ENCODE measurements at regions of chr17 and their contacts with region 1.

Region 1: GRCh38 chr17:16653209-16654041 is at the start of gene ZNF624:
- DNase-seq: peak; percentile 94 to 99
- ATAC-seq: peak; percentile 94
- H3K4me3 ChIP-seq: peak within 1 kb of the TSS; percentile 66 to 93 (median 82)
- H3K27ac ChIP-seq: peak within 1 kb of the TSS; percentile 93 to 99 (median 96)
- H3K4me1 ChIP-seq: peaks cover 0 to 4% of the 10 kb centered on the region in 2 donors
- H3K27me3 ChIP-seq: no peaks in the 10 kb centered on the region
- CTCF ChIP-seq: no peak
- POLR2A ChIP-seq: peak; percentile 78 to 88
- total RNA-seq, gene ZNF624: 0.86 to 2.2 (median 0.94) TPM

Region 2: DNA sequence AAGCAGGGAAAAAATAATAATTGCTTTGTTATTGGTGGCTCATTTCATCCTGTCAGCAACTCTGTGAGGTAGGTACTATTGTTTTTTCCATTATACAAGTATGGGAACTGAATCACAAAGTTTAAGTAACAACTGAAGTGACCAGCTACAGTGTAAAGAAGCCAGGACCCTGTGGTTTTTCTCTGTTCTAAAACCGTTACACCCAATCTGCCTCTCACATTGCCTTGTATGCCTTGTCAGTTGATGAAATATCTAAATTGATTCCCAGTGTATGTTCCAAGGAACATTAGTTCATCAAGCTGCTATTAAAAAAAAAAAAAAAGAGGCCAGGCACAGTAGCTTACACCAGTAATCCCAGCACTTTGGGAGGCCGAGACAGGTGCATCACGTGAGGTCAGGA is 431.0 kb before region 1 on chr17:
- in situ Hi-C with region 1: no loop called
- intact Hi-C with region 1: no loop called
- DNase-seq: no peak
- ATAC-seq: no peak
- H3K4me3 ChIP-seq: no peak overlapping the region
- H3K27ac ChIP-seq: no peak overlapping the region
- H3K4me1 ChIP-seq: peaks cover 10 to 12% of the 10 kb centered on the region in 2 donors
- H3K27me3 ChIP-seq: no peaks in the 10 kb centered on the region
- CTCF ChIP-seq: no peak
- POLR2A ChIP-seq: no peak

Region 3: DNA sequence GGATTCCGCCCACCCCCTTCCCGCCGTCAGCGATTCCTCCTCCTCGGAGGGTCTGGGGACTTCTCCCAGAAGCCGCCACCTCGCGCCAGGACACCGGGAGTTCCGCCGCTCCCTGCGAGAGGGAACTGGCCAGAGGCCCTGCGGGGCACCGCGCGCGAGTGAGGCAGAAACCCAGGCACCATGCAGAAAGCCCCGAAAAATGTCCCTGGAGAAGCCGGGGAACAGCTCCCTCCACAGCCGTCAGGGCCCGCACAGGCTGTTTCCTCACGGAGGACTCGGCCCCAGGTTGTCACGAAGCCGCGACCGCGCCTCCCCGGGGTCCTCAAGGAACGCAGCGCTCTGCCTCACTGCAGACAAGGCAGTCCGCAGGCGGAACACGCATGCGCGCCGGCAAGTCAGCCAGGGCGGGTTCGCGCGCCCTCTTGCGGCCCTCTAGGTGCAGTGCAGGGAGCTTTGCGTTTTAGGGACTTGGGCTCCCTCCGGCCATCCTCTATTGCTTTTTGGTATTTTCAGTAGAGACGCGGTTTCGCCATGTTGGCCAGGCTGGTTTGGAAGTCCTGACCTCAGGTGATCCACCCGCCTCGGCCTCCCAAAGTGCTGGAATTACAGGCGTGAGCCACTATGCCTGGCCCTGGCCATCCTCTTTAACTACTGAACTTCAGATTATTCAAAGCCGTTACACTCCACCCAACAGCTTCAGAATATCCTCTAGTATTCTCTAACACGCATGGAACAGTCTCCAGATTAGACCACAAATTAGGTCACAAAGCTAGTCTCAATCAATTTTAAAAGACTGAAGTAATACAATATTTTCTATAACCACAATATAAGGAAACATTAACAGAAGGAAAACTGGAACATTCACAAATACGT is 64.1 kb before region 1 on chr17:
- in situ Hi-C with region 1: no loop called
- intact Hi-C with region 1: loop called (anchors 2 kb)
- DNase-seq: peak; percentile 79 to 84
- ATAC-seq: peak; percentile 90 to 92
- H3K4me3 ChIP-seq: peak overlapping the region; percentile 64 to 79 (median 68)
- H3K27ac ChIP-seq: peak overlapping the region; percentile 35 to 62 (median 55)
- H3K4me1 ChIP-seq: peaks cover 4 to 8% of the 10 kb centered on the region in 2 donors
- H3K27me3 ChIP-seq: peaks cover 0 to 3% (median 0%) of the 10 kb centered on the region in 3 donors
- CTCF ChIP-seq: peak; percentile 91 to 100 (median 92)
- POLR2A ChIP-seq: no peak

Region 4: GRCh38 chr17:16886655-16887322 is 233.4 kb after region 1 on chr17:
- in situ Hi-C with region 1: no loop called
- intact Hi-C with region 1: no loop called
- DNase-seq: no peak
- ATAC-seq: no peak
- H3K4me3 ChIP-seq: no peak overlapping the region
- H3K27ac ChIP-seq: no peak overlapping the region
- H3K4me1 ChIP-seq: no peaks in the 10 kb centered on the region
- H3K27me3 ChIP-seq: no peaks in the 10 kb centered on the region
- CTCF ChIP-seq: no peak
- POLR2A ChIP-seq: no peak

Measured in gastrocnemius medialis (tissue), 4 donors.